WTC11 (cell line): ENCODE measurements at regions of chr21 and their contacts with region 1.

Region 1: DNA sequence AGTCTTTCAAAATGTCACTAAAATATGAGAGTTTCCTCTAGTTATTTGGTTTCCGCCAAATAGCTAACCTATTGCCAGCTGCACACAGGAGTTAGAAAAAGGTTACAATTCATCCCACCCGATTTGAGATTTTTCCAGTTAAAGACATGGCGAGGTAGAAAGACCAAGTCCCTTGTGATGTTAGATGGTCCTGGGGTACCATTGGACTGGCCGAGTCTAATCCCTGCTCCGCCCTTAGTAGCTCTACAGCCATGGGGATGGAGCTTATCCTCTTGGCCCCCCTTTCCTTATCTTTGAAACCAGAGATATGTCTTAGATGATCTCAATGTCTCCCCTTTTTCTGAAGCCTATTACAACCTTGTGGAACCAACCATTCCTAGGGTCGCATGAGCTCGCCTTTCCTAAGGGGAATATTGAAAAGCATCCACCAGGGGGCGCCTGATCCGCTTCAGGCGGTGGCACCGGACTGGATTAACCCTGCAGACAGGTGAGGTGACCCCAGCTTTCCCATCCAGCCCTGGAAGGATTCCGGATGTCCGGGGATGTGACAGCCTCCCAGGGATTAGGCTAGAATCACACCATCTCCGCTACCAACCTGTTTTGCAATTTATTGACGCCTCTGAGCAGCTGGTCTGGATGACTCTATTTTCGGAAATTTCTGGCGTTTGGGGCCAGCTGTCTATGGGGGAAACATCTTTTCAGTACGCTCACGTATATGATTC is 68.3 kb upstream of the SIM2 start:
- DNase-seq: peak; percentile 91
- ATAC-seq: peak; percentile 95
- H3K4me3 Mint-ChIP-seq: no peak overlapping the region
- H3K27ac Mint-ChIP-seq: no peak overlapping the region
- H3K4me1 Mint-ChIP-seq: peaks cover 11% of the 10 kb centered on the region
- H3K27me3 Mint-ChIP-seq: peaks cover 8% of the 10 kb centered on the region
- CTCF ChIP-seq: peak; percentile 89

Region 2: GRCh38 chr21:36504067-36505058 is 126.3 kb before region 1 on chr21:
- CTCF ChIA-PET with region 1: interaction called, 17 read pairs
- POLR2A ChIA-PET with region 1: no interaction called
- DNase-seq: peak; percentile 24
- ATAC-seq: no peak
- H3K4me3 Mint-ChIP-seq: no peak overlapping the region
- H3K27ac Mint-ChIP-seq: no peak overlapping the region
- H3K4me1 Mint-ChIP-seq: peaks cover 2% of the 10 kb centered on the region
- H3K27me3 Mint-ChIP-seq: no peaks in the 10 kb centered on the region
- CTCF ChIP-seq: peak; percentile 93

Region 3: GRCh38 chr21:36615274-36615964 is 15.2 kb before region 1 on chr21:
- CTCF ChIA-PET with region 1: interaction called, 35 read pairs
- POLR2A ChIA-PET with region 1: no interaction called
- DNase-seq: peak; percentile 53
- ATAC-seq: peak; percentile 96
- H3K4me3 Mint-ChIP-seq: no peak overlapping the region
- H3K27ac Mint-ChIP-seq: no peak overlapping the region
- H3K4me1 Mint-ChIP-seq: no peaks in the 10 kb centered on the region
- H3K27me3 Mint-ChIP-seq: peaks cover 5% of the 10 kb centered on the region
- CTCF ChIP-seq: peak; percentile 41; the same call in 1 of the 2 replicates

Region 4: GRCh38 chr21:36654324-36654723 is 23.7 kb after region 1 on chr21:
- CTCF ChIA-PET with region 1: interaction called, 11 read pairs
- POLR2A ChIA-PET with region 1: no interaction called
- DNase-seq: no peak
- ATAC-seq: no peak
- H3K4me3 Mint-ChIP-seq: no peak overlapping the region
- H3K27ac Mint-ChIP-seq: no peak overlapping the region
- H3K4me1 Mint-ChIP-seq: no peaks in the 10 kb centered on the region
- H3K27me3 Mint-ChIP-seq: no peaks in the 10 kb centered on the region; the same call in 1 of the 2 replicates
- CTCF ChIP-seq: no peak

Region 5: DNA sequence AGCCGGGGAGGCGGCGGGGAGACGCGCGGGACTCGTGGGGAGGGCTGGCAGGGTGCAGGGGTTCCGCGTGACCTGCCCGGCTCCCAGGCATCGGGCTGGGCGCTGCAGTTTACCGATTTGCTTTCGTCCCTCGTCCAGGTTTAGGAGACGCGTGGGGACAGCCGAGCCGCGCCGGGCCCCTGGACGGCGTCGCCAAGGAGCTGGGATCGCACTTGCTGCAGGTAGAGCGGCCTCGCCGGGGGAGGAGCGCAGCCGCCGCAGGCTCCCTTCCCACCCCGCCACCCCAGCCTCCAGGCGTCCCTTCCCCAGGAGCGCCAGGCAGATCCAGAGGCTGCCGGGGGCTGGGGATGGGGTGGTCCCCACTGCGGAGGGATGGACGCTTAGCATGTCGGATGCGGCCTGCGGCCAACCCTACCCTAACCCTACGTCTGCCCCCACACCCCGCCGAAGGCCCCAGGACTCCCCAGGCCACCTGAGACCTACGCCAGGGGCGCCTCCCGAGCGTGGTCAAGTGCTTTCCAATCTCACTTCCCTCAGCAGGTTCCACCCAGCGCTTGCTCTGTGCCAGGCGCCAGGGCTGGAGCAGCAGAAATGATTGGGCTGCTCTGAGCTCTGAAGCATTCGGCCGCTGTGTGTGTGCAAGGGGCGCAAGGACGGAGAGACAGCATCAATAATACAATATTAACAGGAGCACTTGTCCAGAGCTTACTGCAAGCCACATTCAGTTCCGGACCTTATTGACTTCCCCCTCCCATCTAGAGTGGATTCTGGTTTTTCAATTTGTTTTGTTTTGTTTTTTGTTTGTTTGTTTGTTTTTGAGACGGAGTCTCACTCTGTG is 78.6 kb after region 1 on chr21:
- CTCF ChIA-PET with region 1: interaction called, 12 read pairs
- POLR2A ChIA-PET with region 1: no interaction called
- DNase-seq: peak; percentile 36
- ATAC-seq: peak; percentile 2; the same call in 1 of the 2 replicates
- H3K4me3 Mint-ChIP-seq: peak overlapping the region; percentile 69
- H3K27ac Mint-ChIP-seq: no peak overlapping the region
- H3K4me1 Mint-ChIP-seq: peaks cover 55% of the 10 kb centered on the region
- H3K27me3 Mint-ChIP-seq: peaks cover 100% of the 10 kb centered on the region
- CTCF ChIP-seq: no peak

Region 6: DNA sequence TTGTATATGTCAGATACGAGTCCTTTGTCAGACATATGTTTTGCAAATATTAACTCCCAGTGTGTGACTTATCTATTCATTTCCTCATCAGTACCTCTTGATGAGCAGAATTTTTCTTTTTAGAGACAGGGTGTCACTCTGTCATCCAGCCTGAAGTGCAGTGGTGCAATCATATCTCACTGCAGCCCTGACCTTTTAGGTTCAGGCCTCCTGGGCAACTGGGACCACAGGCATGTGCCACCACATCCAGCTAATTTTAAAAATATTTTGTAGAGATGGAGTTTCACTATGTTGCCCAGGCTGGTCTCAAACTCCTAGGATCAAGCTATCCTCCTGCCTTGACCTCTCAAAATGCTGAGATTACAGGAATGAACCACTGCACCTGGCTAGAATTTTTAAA is 242.9 kb after region 1 on chr21:
- CTCF ChIA-PET with region 1: no interaction called
- POLR2A ChIA-PET with region 1: no interaction called
- DNase-seq: no peak
- ATAC-seq: no peak
- H3K4me3 Mint-ChIP-seq: no peak overlapping the region
- H3K27ac Mint-ChIP-seq: no peak overlapping the region
- H3K4me1 Mint-ChIP-seq: no peaks in the 10 kb centered on the region
- H3K27me3 Mint-ChIP-seq: no peaks in the 10 kb centered on the region
- CTCF ChIP-seq: no peak